Thyroid gland (tissue), 4 donors: ENCODE measurements at regions of chr7 and their contacts with region 1.

Region 1: DNA sequence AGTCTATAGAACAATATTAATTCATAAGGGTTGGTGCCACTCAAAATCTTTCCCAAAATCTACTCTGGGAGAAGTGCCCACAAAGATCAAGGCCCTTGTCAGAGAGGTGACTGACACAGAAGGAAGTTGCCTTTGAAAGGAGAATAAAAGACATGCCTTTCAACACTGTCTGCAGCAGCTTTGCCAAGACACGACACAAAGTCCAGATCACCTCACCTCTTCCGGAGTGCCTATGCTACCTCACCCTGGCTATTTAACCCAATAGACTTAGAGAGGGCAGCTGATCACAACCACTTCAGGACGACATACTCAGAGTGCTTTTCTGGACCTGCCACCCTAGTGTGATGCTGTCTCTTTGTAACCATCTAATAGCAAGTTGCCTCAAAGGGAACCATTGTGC is 49.0 kb upstream of the YAE1 start:
- DNase-seq: no peak
- H3K4me3 ChIP-seq: no peak overlapping the region
- H3K27ac ChIP-seq: no peak overlapping the region
- H3K4me1 ChIP-seq: no peaks in the 10 kb centered on the region
- H3K27me3 ChIP-seq: no peaks in the 10 kb centered on the region
- CTCF ChIP-seq: no peak
- POLR2A ChIP-seq: no peak

Region 2: DNA sequence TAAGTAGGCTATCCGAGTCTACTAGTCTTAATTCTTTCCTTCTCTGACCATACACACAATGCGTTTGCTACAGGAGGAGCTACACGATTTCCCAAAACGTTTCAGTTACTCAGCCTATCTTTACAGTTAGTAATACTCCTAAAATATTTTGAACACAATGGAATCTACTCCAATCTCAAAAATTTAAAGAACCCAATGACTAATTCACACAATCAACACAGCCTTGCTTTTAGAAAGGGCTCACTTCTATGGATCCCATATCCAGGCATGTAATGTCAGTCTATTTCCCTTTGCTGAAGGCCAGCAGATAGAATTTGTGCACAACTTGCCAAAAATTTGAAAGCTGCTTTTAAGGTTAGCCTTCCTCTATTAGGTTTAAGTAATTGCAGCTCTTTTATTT is 715.5 kb before region 1 on chr7:
- intact Hi-C with region 1: loop called (anchors 5 kb)
- DNase-seq: no peak
- H3K4me3 ChIP-seq: no peak overlapping the region
- H3K27ac ChIP-seq: no peak overlapping the region
- H3K4me1 ChIP-seq: no peaks in the 10 kb centered on the region
- H3K27me3 ChIP-seq: no peaks in the 10 kb centered on the region
- CTCF ChIP-seq: no peak
- POLR2A ChIP-seq: no peak